Activated CD4-positive, alpha-beta memory T cell treated with anti-CD3 and anti-CD28 coated beads for 36 hours (primary cell): ENCODE measurements at regions of chr15 and their contacts with region 1.

Region 1: GRCh38 chr15:45714590-45715488 is 80.0 kb downstream of the SQOR start:
- DNase-seq: peak; percentile 66
- H3K4me3 Mint-ChIP-seq: no peak overlapping the region
- H3K27ac Mint-ChIP-seq: no peak overlapping the region
- H3K4me1 Mint-ChIP-seq: peaks cover 5% of the 10 kb centered on the region
- H3K27me3 Mint-ChIP-seq: peaks cover 24% of the 10 kb centered on the region

Region 2: GRCh38 chr15:45529613-45530012 is 185.2 kb before region 1 on chr15:
- CTCF ChIA-PET with region 1: no interaction called
- POLR2A ChIA-PET with region 1: no interaction called
- intact Hi-C with region 1: no loop called
- DNase-seq: no peak
- H3K4me3 Mint-ChIP-seq: no peak overlapping the region
- H3K27ac Mint-ChIP-seq: no peak overlapping the region
- H3K4me1 Mint-ChIP-seq: no peaks in the 10 kb centered on the region
- H3K27me3 Mint-ChIP-seq: peaks cover 2% of the 10 kb centered on the region

Region 3: DNA sequence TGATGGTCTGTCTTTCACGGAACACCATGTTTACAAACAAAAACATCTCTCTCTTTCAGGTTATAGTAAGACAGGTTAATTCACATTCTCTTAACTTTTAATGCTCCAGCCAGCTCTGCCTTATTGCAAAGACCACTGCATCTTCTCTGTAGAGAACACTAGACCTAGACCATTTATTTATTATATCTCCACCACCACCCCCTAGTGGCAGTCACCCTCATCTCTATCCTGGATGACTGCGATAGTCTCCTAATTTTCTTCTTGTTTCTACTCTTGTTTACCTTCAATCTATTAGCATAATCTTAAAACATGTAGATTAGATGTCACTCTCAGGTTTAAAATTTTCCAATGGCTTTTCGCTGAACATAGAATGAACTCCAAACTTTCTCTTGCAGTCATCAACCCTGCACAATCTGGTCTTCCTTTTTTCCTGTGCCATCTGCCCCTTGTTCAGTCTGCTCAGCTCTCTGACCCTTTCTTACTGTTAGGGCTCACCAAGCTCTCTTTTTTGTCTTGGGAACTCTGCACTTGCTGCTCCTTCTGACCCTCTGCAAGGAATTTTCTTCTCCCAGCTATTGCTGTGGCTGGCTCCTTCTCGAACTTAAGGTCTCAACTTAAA is 75.6 kb after region 1 on chr15:
- CTCF ChIA-PET with region 1: interaction called, 17 read pairs
- POLR2A ChIA-PET with region 1: no interaction called
- intact Hi-C with region 1: loop called (anchors 2 kb)
- DNase-seq: peak; percentile 18
- H3K4me3 Mint-ChIP-seq: no peak overlapping the region
- H3K27ac Mint-ChIP-seq: no peak overlapping the region
- H3K4me1 Mint-ChIP-seq: no peaks in the 10 kb centered on the region
- H3K27me3 Mint-ChIP-seq: peaks cover 18% of the 10 kb centered on the region

Region 4: GRCh38 chr15:45795440-45796069 is 80.7 kb after region 1 on chr15:
- CTCF ChIA-PET with region 1: interaction called, 17 read pairs
- POLR2A ChIA-PET with region 1: no interaction called
- intact Hi-C with region 1: loop called (anchors 2 kb)
- DNase-seq: peak; percentile 10
- H3K4me3 Mint-ChIP-seq: no peak overlapping the region
- H3K27ac Mint-ChIP-seq: no peak overlapping the region
- H3K4me1 Mint-ChIP-seq: no peaks in the 10 kb centered on the region
- H3K27me3 Mint-ChIP-seq: peaks cover 22% of the 10 kb centered on the region